Cardiac septum (tissue), 1 donor: ENCODE measurements at regions of chr7 and their contacts with region 1.

Region 1: DNA sequence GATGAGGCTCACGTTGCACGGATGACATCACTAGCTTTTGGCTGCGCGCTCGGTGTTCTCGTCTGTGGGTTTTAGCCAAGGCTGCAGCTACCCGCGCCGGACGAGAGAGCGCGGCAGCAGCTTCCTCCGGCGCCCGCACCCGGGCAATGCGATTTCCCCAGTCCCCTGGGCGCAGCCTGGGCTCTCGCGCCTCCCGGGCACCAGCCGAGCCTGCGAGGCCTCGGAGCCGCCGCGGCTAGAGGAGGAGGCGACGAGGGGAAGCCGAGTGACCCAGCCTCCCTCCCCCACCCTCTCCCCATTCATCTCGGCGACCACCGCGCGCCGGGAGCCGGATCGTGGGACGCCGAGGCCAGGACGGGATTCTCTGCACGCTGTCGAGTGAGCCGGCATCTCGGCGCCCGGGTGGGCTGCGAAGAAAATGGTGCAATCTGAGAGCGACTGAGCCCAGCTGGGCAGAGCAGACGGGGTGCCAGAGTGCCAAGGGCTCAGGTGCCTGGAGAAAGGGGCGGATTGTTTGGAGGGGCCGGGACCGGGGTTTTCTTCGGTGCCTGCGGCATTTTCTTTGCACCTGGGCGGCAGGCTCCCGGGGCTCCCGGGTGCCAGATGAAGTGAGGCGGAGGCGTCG is 1.2 kb upstream of the TMEM178B start:
- DNase-seq: no peak

Region 2: DNA sequence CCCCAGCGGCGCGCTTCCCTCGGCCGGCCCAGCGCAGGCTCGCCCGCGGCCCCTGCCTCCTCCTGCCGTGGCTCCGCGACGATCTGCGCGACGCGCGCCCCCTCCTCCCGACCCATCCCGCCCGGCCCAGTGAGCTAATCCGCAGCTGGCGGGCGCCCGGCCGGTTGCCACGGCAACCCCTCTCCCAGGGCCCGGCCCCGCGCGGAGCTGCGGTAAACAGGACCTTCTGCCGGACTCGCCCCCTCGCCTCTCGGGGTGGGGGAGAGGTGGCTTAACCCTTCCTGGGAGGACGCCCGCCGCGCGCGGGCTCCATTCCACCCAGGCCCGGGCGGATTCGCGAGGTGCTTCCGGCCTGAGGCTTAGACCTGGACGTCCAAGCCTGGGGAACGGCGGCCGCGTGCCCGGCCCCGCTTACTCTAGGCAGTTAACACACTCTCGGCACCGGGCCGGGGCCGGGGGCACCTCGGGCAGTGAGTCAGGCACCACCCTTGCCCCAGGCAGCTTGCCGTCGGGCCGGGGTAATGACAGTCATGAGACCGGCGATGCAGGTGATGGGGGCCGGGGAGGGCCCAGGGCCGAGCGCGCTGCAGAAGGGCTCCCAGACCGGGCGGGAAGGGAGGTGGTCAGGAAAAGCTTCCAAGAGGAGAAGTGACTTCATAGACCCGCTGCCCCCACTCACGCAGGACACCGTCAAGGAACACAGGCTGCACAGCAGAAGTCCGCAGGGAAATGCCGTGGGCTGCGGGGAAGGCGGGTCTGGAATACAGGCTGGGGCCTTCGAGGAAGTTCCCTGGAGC is 431.7 kb before region 1 on chr7 and contains the start of gene DENND2A:
- intact Hi-C with region 1: no loop called
- DNase-seq: peak; percentile 81
- total RNA-seq, gene DENND2A: 7.2 TPM

Region 3: DNA sequence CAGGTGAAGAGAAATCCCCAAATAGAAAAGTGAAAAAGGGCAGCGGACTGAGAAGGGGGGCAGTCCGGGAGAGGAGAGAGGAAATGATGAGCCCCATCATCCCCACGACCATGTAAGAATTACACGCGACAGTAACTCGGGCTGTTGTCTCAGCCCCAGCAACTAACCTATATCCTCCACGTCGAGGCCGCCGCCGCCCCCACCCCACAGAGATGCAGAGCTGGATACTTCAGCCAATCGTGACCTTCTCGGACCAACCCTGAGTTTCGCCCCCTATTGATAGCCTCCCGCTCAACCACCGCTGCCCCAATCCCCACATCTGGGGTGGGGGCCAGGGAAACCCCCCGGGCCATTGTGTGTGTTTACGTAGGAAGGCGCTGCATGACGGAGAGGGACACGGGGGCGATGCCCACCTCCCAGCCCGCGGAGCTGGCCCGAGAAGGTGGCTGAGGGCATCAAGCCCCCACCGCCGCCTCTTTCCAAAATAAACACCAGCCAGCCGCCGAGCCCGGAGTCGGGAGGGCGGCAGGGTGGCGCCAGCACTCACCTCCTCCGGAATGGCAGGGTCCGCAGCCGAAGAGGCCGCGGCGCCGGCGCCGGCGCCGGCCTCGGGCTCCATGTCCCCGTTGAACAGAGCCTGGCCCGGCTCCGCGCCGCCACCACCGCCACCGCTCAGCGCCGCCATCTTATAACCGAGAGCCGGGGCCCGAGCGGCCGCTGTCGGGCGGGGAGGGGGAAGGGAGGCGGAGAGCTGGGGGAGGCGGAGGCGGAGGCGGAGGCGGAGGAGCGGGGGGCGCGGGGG is 148.4 kb before region 1 on chr7:
- intact Hi-C with region 1: no loop called
- DNase-seq: peak; percentile 86

Region 4: GRCh38 chr7:141210862-141211261 is 138.2 kb after region 1 on chr7:
- intact Hi-C with region 1: loop called (anchors 10 kb)
- DNase-seq: no peak

Region 5: GRCh38 chr7:141533149-141533949 is 460.7 kb after region 1 on chr7:
- intact Hi-C with region 1: loop called (anchors 5 kb)
- DNase-seq: no peak